ENCODE measurements at regions of chr2 and their contacts with region 1.

Region 1: GRCh38 chr2:12212841-12213597 is 466.6 kb downstream of the LPIN1 start:
- DNase-seq: no peak
- ATAC-seq: no peak
- H3K4me3 ChIP-seq: no peak overlapping the region
- H3K4me3 Mint-ChIP-seq: no peak overlapping the region
- H3K27ac ChIP-seq: no peak overlapping the region
- H3K27ac Mint-ChIP-seq: no peak overlapping the region
- H3K4me1 ChIP-seq: no peaks in the 10 kb centered on the region
- H3K4me1 Mint-ChIP-seq: peaks cover 0 to 2% (median 0%) of the 10 kb centered on the region in 3 donors
- H3K27me3 ChIP-seq: peaks cover 0 to 2% of the 10 kb centered on the region in 2 experiments
- H3K27me3 Mint-ChIP-seq: no peaks in the 10 kb centered on the region

Region 2: GRCh38 chr2:10864861-10865636 is 1348.0 kb before region 1 on chr2:
- CTCF ChIA-PET with region 1: no interaction called
- POLR2A ChIA-PET with region 1: no interaction called
- DNase-seq: peak in 17 of 35 experiments; percentile 4 to 42 (median 10)
- ATAC-seq: peak; percentile 68 to 89 (median 77)
- H3K4me3 ChIP-seq: no peak overlapping the region
- H3K4me3 Mint-ChIP-seq: peak overlapping the region in 2 of 3 donors; percentile 34 to 37
- H3K27ac ChIP-seq: no peak overlapping the region
- H3K27ac Mint-ChIP-seq: no peak overlapping the region
- H3K4me1 ChIP-seq: peaks cover 17 to 22% of the 10 kb centered on the region in 2 experiments
- H3K4me1 Mint-ChIP-seq: peaks cover 19 to 35% (median 23%) of the 10 kb centered on the region in 3 donors
- H3K27me3 ChIP-seq: peaks cover 0 to 32% of the 10 kb centered on the region in 2 experiments
- H3K27me3 Mint-ChIP-seq: peaks cover 13 to 24% of the 10 kb centered on the region in 2 donors

Region 3: GRCh38 chr2:11945139-11946126 is 267.6 kb before region 1 on chr2:
- CTCF ChIA-PET with region 1: no interaction called
- POLR2A ChIA-PET with region 1: no interaction called
- DNase-seq: peak in 1 of 35 experiments; percentile 15
- ATAC-seq: peak in 2 of 4 experiments; percentile 43 to 60
- H3K4me3 ChIP-seq: peak overlapping the region in 1 of 2 donors; percentile 24
- H3K4me3 Mint-ChIP-seq: peak overlapping the region; percentile 69 to 76 (median 72)
- H3K27ac ChIP-seq: no peak overlapping the region
- H3K27ac Mint-ChIP-seq: peak overlapping the region; percentile 89 to 90
- H3K4me1 ChIP-seq: peaks cover 0 to 6% of the 10 kb centered on the region in 2 experiments
- H3K4me1 Mint-ChIP-seq: peaks cover 17 to 26% (median 18%) of the 10 kb centered on the region in 3 donors
- H3K27me3 ChIP-seq: no peaks in the 10 kb centered on the region
- H3K27me3 Mint-ChIP-seq: no peaks in the 10 kb centered on the region

Region 4: GRCh38 chr2:12176623-12177454 is 36.2 kb before region 1 on chr2:
- CTCF ChIA-PET with region 1: no interaction called
- POLR2A ChIA-PET with region 1: no interaction called
- DNase-seq: peak in 3 of 35 experiments; percentile 8 to 16 (median 14)
- ATAC-seq: peak; percentile 17 to 41 (median 36)
- H3K4me3 ChIP-seq: no peak overlapping the region
- H3K4me3 Mint-ChIP-seq: peak overlapping the region; percentile 22 to 62 (median 34)
- H3K27ac ChIP-seq: peak overlapping the region; percentile 60
- H3K27ac Mint-ChIP-seq: peak overlapping the region; percentile 83 to 88
- H3K4me1 ChIP-seq: peaks cover 25 to 28% of the 10 kb centered on the region in 2 experiments
- H3K4me1 Mint-ChIP-seq: peaks cover 38 to 60% (median 48%) of the 10 kb centered on the region in 3 donors
- H3K27me3 ChIP-seq: no peaks in the 10 kb centered on the region
- H3K27me3 Mint-ChIP-seq: no peaks in the 10 kb centered on the region

Region 5: GRCh38 chr2:12199491-12200211 is 13.4 kb before region 1 on chr2:
- CTCF ChIA-PET with region 1: interaction called in 1 of 2 experiments, 11 read pairs
- POLR2A ChIA-PET with region 1: no interaction called
- DNase-seq: no peak
- ATAC-seq: no peak
- H3K4me3 ChIP-seq: no peak overlapping the region
- H3K4me3 Mint-ChIP-seq: no peak overlapping the region
- H3K27ac ChIP-seq: no peak overlapping the region
- H3K27ac Mint-ChIP-seq: no peak overlapping the region
- H3K4me1 ChIP-seq: no peaks in the 10 kb centered on the region
- H3K4me1 Mint-ChIP-seq: peaks cover 2 to 14% (median 3%) of the 10 kb centered on the region in 3 donors
- H3K27me3 ChIP-seq: no peaks in the 10 kb centered on the region
- H3K27me3 Mint-ChIP-seq: no peaks in the 10 kb centered on the region

Region 6: DNA sequence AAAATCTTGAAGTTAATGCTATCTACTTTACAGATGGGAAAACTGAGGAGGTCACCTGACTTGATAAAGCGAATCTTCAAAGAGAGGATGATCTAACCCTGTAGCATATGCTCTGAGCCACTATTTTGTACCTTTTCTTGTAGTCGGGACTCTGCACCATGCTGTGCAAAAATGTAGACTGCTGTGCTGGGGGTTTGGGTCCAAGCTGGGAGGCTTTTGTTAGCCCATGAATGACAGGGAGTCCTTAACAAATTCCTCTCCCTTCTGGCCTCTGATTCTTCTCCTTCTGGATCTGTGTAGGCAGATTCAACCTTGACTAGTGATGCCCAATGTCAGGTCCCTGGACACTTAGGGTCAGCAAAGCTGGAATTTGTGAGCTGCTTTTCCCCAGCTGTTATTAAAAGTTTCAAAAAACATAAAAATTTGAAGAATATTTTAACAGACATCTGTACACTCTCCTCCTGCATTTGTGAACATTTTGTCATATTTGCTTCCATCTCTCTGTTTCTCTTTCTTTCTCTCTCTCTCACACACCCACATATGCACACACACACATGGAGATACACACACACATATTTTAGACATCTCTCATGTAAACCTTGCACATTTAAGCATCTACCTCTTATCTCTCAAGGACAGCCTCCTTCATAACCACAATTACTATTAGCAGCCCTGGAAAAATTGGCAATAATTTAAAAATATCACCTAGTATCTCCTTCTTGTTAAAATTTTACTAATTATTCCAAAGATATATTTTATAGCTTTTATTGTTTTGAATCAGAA is 168.7 kb after region 1 on chr2:
- CTCF ChIA-PET with region 1: no interaction called
- POLR2A ChIA-PET with region 1: no interaction called
- DNase-seq: no peak
- ATAC-seq: no peak
- H3K4me3 ChIP-seq: no peak overlapping the region
- H3K4me3 Mint-ChIP-seq: no peak overlapping the region
- H3K27ac ChIP-seq: no peak overlapping the region
- H3K27ac Mint-ChIP-seq: no peak overlapping the region
- H3K4me1 ChIP-seq: no peaks in the 10 kb centered on the region
- H3K4me1 Mint-ChIP-seq: no peaks in the 10 kb centered on the region
- H3K27me3 ChIP-seq: no peaks in the 10 kb centered on the region
- H3K27me3 Mint-ChIP-seq: no peaks in the 10 kb centered on the region

Measured in T-cell (primary cell).